HEK293 (cell line): ENCODE measurements at regions of chr1 and their contacts with region 1.

Region 1: GRCh38 chr1:116139592-116140134 is 28.5 kb downstream of the MAB21L3 start:
- H3K4me3 ChIP-seq: no peak overlapping the region
- H3K27ac ChIP-seq: no peak overlapping the region
- H3K4me1 ChIP-seq: no peaks in the 10 kb centered on the region
- CTCF ChIP-seq: no peak

Region 2: DNA sequence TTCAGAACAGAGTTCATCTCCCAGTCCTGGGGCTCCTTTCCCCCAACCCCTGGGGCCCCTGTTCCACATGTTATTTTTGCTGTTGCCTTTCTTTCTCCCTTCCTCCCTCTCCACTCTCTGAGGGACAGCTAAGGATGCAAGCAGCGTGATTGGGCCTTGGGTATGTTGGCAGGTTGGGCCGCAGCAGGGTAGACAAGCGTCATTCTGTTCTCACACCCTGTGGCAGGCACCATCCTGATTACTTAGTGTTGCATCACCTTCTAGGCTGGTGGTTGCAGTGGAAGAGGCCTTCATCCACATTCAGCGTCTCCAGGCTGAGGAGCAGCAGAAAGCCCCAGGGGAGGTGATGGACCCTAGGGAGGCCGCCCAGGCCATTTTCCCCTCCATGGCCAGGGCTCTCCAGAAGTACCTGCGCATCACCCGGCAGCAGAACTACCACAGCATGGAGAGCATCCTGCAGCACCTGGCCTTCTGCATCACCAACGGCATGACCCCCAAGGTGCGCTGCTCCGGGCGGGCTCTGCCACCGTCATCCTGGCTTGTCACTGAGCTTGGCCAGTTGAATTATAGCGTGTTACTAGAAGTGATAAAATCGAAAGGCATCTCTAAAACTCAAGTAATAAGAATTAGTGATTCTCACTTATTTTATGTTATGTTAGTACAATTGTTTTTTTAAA is 454.5 kb before region 1 on chr1:
- CTCF ChIA-PET with region 1: no interaction called
- POLR2A ChIA-PET with region 1: no interaction called
- H3K4me3 ChIP-seq: no peak overlapping the region
- H3K27ac ChIP-seq: no peak overlapping the region
- H3K4me1 ChIP-seq: no peaks in the 10 kb centered on the region
- CTCF ChIP-seq: no peak

Region 3: DNA sequence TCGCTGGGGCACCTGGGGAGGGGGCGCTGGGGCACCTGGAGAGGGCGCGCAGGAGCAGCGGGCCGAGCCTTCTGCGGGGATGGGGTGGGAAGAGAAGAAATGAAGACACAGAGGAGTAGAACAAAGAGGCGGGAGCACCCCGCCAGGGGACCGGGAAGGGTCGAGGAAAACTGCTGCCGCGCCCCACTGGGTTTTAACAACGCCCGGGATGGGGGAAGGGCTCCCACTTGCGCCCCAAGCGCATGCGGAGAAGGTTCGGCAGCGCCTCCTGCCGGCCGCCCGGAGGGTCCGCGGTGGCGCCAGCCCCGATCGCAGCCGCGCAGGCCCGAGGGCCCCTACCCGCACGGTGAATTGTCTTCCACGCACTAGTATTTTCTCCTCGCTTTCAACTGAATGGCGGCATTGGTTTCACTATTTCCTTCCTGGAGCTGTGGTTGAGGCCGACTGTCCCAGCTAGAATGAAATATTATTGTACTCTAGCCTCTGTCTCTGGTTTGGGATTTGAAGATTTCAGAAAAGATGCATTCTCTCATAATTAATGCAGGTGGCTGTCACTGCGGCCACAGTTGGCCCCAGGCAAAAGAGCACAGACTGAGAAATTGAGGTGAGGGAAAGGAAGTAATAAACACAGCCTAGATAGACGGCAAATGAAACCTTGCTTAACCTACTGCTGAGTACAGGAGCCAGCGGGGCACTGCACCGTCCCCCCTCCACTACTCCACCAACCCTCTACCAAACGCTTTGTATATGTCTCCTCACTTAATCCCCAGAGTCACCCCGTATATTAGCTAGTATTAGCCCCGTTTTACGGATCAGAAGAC is 28.8 kb after region 1 on chr1:
- CTCF ChIA-PET with region 1: interaction called, 15 read pairs
- POLR2A ChIA-PET with region 1: no interaction called
- H3K4me3 ChIP-seq: peak overlapping the region; percentile 27
- H3K27ac ChIP-seq: no peak overlapping the region; the same call in 1 of the 2 replicates
- H3K4me1 ChIP-seq: no peaks in the 10 kb centered on the region
- CTCF ChIP-seq: peak; percentile 31; the same call in 1 of the 2 replicates

Region 4: DNA sequence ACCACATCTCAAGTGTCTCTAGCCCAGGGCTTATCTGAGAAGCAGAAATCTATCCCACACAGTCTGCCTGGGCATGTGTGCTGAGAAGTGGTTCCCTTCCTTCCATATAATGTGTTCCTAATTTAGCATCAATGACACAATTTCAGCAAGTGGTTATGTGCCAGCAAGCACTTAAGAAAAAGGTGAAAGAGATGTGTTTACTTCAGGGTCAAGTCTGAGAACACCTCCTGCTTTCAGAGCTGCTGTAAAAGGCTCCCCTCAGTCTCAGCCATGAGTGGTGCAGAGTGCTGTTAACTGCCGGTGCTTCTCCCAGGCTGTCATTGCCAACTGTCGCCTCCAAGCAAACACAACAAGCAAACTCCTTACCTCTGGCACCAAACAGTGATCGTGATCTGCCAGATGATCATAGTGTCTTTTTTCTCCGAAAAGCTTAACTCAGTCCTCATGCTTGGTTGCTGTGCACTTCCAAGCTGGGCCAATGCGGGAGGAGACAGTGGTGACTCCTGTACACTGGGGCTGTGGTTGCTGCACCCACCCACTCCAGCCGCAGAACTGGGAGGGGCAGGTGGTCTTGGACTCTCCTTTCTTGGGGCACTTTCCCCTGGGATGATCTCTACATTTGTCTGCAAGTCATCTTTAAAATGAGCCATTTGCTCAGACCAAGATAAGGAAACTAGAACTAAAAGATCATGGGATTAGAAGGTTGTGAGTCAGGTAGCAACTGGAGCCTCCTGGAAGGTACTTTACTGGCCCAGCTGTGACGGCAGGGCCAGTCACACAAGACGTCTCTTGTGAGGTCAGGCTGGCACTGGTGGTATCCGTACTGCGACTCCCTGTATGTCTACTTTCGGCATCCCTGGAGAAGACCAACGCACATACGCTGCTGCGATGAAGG is 265.8 kb after region 1 on chr1:
- CTCF ChIA-PET with region 1: interaction called, 11 read pairs
- POLR2A ChIA-PET with region 1: no interaction called
- H3K4me3 ChIP-seq: no peak overlapping the region
- H3K27ac ChIP-seq: no peak overlapping the region
- H3K4me1 ChIP-seq: no peaks in the 10 kb centered on the region
- CTCF ChIP-seq: no peak

Region 5: GRCh38 chr1:116485071-116485735 is 345.5 kb after region 1 on chr1:
- CTCF ChIA-PET with region 1: interaction called, 331 read pairs
- POLR2A ChIA-PET with region 1: interaction called, 7 read pairs
- H3K4me3 ChIP-seq: no peak overlapping the region
- H3K27ac ChIP-seq: no peak overlapping the region
- H3K4me1 ChIP-seq: no peaks in the 10 kb centered on the region
- CTCF ChIP-seq: peak; percentile 80

Region 6: GRCh38 chr1:116504308-116505156 is 364.9 kb after region 1 on chr1:
- CTCF ChIA-PET with region 1: interaction called, 171 read pairs
- POLR2A ChIA-PET with region 1: interaction called, 6 read pairs
- H3K4me3 ChIP-seq: no peak overlapping the region
- H3K27ac ChIP-seq: no peak overlapping the region
- H3K4me1 ChIP-seq: no peaks in the 10 kb centered on the region
- CTCF ChIP-seq: no peak